ENCODE measurements at regions of chr1 and their contacts with region 1.

Region 1: GRCh38 chr1:7879228-7879627 is 26.4 kb upstream of the UTS2 start:
- DNase-seq: no peak
- H3K4me3 ChIP-seq: no peak overlapping the region
- H3K27ac ChIP-seq: no peak overlapping the region
- H3K4me1 ChIP-seq: no peaks in the 10 kb centered on the region
- H3K27me3 ChIP-seq: no peaks in the 10 kb centered on the region
- CTCF ChIP-seq: no peak
- POLR2A ChIP-seq: no peak

Region 2: DNA sequence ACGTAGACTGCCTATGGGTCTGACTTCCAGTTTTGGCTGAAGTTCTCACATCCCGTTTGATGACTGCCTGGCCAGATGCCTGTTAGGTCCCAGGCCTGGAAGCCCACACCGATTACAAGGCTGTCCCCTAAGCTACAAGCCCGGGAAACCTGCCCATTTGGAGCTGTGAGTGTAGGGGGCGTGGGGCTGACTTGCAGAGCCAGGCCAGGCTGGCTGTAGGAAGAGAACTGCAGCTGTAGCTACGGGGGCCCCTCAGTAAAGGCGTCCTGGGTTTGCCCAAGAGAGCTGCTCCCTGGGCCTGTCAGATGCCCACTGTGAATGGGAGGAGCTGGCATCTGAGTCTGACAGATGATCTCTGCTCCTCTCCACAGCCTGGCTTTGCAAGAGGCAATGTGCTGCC is 894.2 kb before region 1 on chr1:
- intact Hi-C with region 1: loop called (anchors 5 kb)
- DNase-seq: peak in 1 of 2 donors; percentile 42
- H3K4me3 ChIP-seq: no peak overlapping the region
- H3K27ac ChIP-seq: no peak overlapping the region
- H3K4me1 ChIP-seq: no peaks in the 10 kb centered on the region
- H3K27me3 ChIP-seq: no peaks in the 10 kb centered on the region
- CTCF ChIP-seq: no peak
- POLR2A ChIP-seq: no peak

Region 3: DNA sequence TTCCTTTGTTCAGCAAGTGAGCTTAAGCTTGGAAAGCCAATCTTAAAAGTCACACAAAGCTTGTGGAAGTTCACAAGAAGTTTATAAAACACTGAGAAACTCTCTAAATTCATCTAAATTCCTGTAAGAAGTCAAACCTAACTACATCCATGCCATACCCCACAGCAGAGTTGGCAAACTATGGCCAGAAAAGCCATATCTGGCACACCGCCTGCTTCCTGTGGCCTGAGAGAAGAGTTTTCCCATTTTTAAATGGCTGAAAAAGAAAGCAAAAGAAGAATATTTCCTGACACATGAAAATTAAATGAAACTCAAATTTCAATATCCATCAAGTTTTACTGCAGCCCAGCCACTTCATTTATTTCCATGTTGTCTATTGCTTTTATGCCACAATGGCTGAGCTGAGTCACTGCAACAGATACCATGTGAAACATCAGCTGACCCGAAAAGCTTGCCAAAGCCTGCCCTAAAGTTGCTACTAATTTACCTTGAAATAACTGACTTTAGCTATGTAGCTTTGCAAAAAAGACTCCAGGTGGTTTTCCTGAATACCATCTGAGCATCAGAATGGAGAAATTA is 675.8 kb after region 1 on chr1:
- intact Hi-C with region 1: no loop called
- DNase-seq: no peak
- H3K4me3 ChIP-seq: no peak overlapping the region
- H3K27ac ChIP-seq: peak overlapping the region in 1 of 2 donors; percentile 4
- H3K4me1 ChIP-seq: no peaks in the 10 kb centered on the region
- H3K27me3 ChIP-seq: no peaks in the 10 kb centered on the region
- CTCF ChIP-seq: no peak
- POLR2A ChIP-seq: no peak

Measured in breast epithelium (tissue), 4 donors.